HCT116 (cell line): ENCODE measurements at regions of chr5 and their contacts with region 1.

Region 1: GRCh38 chr5:36870399-36871040 is 6.0 kb upstream of the NIPBL start:
- DNase-seq: peak; percentile 68
- ATAC-seq: peak; percentile 87
- H3K4me3 ChIP-seq: no peak overlapping the region
- H3K27ac ChIP-seq: no peak overlapping the region
- H3K4me1 ChIP-seq: peaks cover 4 to 12% of the 10 kb centered on the region in 2 experiments; a peak in 2 of 4 replicates
- H3K27me3 ChIP-seq: no peaks in the 10 kb centered on the region
- CTCF ChIP-seq: peak; percentile 47 to 82 (median 75); a peak in 4 of 6 replicates
- POLR2A ChIP-seq: no peak
- RAD21 ChIP-seq: peak; percentile 71

Region 2: GRCh38 chr5:36728697-36729543 is 141.6 kb before region 1 on chr5:
- CTCF ChIA-PET with region 1: interaction called, 18 read pairs
- POLR2A ChIA-PET with region 1: no interaction called
- RAD21 ChIA-PET with region 1: no interaction called
- intact Hi-C with region 1: no loop called
- DNase-seq: no peak
- ATAC-seq: peak; percentile 82
- H3K4me3 ChIP-seq: no peak overlapping the region
- H3K27ac ChIP-seq: no peak overlapping the region
- H3K4me1 ChIP-seq: no peaks in the 10 kb centered on the region
- H3K27me3 ChIP-seq: no peaks in the 10 kb centered on the region
- CTCF ChIP-seq: peak; percentile 58 to 70 (median 62); a peak in 5 of 6 replicates
- POLR2A ChIP-seq: no peak
- RAD21 ChIP-seq: peak; percentile 60

Region 3: GRCh38 chr5:36734422-36734821 is 136.1 kb before region 1 on chr5:
- CTCF ChIA-PET with region 1: interaction called, 23 read pairs
- POLR2A ChIA-PET with region 1: no interaction called
- RAD21 ChIA-PET with region 1: no interaction called
- intact Hi-C with region 1: loop called (anchors 1 kb)
- DNase-seq: no peak
- ATAC-seq: peak; percentile 81
- H3K4me3 ChIP-seq: no peak overlapping the region
- H3K27ac ChIP-seq: no peak overlapping the region
- H3K4me1 ChIP-seq: peaks cover 0 to 2% of the 10 kb centered on the region in 2 experiments; a peak in 2 of 4 replicates
- H3K27me3 ChIP-seq: no peaks in the 10 kb centered on the region
- CTCF ChIP-seq: peak in 2 of 3 experiments; percentile 11 to 39; a peak in 1 of 6 replicates
- POLR2A ChIP-seq: no peak
- RAD21 ChIP-seq: peak; percentile 57

Region 4: DNA sequence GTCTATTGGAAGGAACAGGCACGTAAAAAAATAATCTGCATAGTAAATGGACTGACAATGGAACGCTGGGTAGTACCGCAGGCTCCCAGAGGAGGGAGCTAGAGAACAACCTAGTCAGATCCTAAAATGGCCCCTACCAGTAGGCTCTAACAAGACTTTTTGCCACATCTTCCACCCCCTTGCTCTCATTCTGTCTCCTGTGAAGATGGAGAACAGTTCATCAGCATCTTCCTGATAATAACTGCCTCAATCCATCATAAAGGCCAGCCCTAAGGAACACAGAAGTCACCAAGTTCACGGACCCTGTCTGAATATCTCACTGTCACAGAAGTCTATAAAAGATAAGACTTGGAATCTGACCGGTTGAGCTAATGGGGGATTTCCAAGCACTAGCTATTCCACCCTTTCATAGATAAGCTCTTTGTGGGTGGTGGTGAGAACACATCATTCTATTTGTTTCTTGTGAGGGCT is 130.7 kb before region 1 on chr5:
- CTCF ChIA-PET with region 1: interaction called, 23 read pairs
- POLR2A ChIA-PET with region 1: no interaction called
- RAD21 ChIA-PET with region 1: no interaction called
- intact Hi-C with region 1: loop called (anchors 1 kb)
- DNase-seq: peak; percentile 73
- ATAC-seq: peak; percentile 61
- H3K4me3 ChIP-seq: no peak overlapping the region
- H3K27ac ChIP-seq: no peak overlapping the region
- H3K4me1 ChIP-seq: peaks cover 8 to 21% of the 10 kb centered on the region in 2 experiments
- H3K27me3 ChIP-seq: no peaks in the 10 kb centered on the region
- CTCF ChIP-seq: peak; percentile 80 to 95 (median 93)
- POLR2A ChIP-seq: no peak
- RAD21 ChIP-seq: peak; percentile 82

Region 5: DNA sequence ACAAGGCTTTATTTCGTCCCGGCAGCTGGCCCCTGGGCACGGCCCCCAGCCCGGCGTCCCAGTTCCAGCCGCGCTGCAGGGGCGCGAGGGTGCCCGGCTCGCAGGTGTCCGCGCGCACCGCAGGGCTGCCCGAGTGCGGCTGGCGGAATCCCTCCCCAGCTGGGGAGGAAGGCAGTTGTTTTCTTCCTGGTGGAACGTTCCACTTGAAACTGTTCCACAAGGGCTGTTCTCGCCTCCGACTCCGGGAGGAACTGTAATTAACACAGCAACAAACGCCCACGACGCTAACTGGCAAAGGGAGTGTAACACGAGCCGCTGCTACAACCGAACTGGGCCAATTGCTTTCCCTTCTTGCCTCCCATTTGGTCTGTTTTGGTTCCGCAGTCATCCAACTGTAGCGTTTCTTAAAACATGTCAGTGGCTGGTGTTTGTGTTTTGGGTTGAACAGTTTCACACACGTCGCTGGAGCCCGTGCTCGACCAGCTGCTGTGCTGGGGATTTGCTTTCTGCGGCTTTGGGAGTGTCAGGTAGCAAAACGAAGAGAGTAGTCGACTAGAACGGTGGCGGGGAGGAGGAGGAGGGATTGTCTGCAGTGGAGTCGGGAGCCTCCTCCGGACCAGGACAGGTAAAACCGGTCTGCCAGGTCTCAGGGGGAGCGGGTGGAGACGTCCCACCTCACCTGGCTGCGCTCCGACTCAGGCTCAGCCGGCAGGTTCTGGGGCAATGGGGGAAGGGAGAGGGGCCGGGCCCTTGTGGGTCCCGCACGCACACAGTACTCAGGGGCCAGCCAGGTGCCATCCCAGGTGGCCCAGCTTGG is 125.5 kb before region 1 on chr5:
- CTCF ChIA-PET with region 1: interaction called, 23 read pairs
- POLR2A ChIA-PET with region 1: no interaction called
- RAD21 ChIA-PET with region 1: no interaction called
- intact Hi-C with region 1: no loop called
- DNase-seq: peak; percentile 63
- ATAC-seq: peak; percentile 80
- H3K4me3 ChIP-seq: peak overlapping the region; percentile 60 to 74
- H3K27ac ChIP-seq: peak overlapping the region; percentile 87
- H3K4me1 ChIP-seq: peaks cover 13 to 24% of the 10 kb centered on the region in 2 experiments
- H3K27me3 ChIP-seq: no peaks in the 10 kb centered on the region
- CTCF ChIP-seq: peak in 1 of 3 experiments; percentile 19; a peak in 2 of 6 replicates
- POLR2A ChIP-seq: no peak
- RAD21 ChIP-seq: no peak; the same call in 1 of the 2 replicates

Region 6: GRCh38 chr5:36882250-36882649 is 11.7 kb after region 1 on chr5:
- CTCF ChIA-PET with region 1: interaction called, 15 read pairs
- POLR2A ChIA-PET with region 1: interaction called, 3 read pairs
- RAD21 ChIA-PET with region 1: no interaction called
- intact Hi-C with region 1: no loop called
- DNase-seq: no peak
- ATAC-seq: no peak
- H3K4me3 ChIP-seq: no peak overlapping the region
- H3K27ac ChIP-seq: no peak overlapping the region
- H3K4me1 ChIP-seq: peaks cover 11 to 14% of the 10 kb centered on the region in 2 experiments; a peak in 3 of 4 replicates
- H3K27me3 ChIP-seq: no peaks in the 10 kb centered on the region
- CTCF ChIP-seq: no peak
- POLR2A ChIP-seq: no peak
- RAD21 ChIP-seq: no peak